Esophagus muscularis mucosa (tissue), 4 donors: ENCODE measurements at regions of chr12 and their contacts with region 1.

Region 1: GRCh38 chr12:48851883-48852733 is at the start of gene DDX23:
- DNase-seq: peak; percentile 99
- H3K4me3 ChIP-seq: peak within 1 kb of the TSS; percentile 74 to 94 (median 90)
- H3K27ac ChIP-seq: peak within 1 kb of the TSS; percentile 80 to 94 (median 84)
- H3K4me1 ChIP-seq: peaks cover 26 to 38% (median 32%) of the 10 kb centered on the region in 4 donors
- H3K27me3 ChIP-seq: no peaks in the 10 kb centered on the region
- CTCF ChIP-seq: no peak
- EP300 ChIP-seq: peak; percentile 94
- POLR2A ChIP-seq: peak; percentile 27
- total RNA-seq, gene DDX23: 51.1 to 88.3 (median 74.1) TPM

Region 2: DNA sequence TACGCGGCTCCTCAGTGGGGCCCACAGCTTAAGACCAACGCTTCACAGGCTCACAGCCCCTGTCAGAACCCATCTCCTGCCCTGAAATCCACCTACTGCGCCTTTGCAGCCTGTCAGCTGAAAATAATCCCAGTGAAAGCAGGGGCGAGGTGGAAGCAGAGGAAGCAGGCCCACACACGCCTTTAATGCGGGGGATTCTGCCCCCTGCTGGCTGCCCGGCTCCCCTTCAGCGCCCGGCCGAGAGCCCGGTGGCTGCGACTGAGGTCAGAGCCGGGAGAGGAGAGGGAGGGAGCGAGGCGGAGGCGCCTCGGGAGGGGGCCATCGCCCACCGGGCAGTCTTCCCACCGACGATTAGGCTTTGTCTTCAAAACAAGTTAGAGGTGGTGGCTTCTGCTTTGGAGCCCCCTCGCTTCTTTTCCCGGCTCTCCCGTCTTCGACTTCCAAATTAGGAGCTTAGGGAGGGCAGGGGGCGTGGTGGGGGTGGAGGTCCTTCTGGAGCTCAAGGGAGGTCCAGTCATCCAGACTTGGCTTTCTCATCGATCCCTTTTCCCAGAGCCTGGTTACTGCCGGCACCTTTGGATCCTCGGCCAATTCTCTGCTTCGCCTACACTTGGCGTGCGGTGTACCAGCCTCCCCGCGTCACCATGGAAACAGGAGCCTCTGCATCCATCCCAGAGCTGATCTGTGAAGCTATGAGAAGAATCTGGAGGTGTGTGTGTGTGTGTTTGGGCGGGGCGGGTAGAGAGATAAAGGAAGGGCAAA is 38.7 kb after region 1 on chr12:
- intact Hi-C with region 1: loop called (anchors 1 kb)
- DNase-seq: no peak
- H3K4me3 ChIP-seq: peak overlapping the region; percentile 31 to 47 (median 41)
- H3K27ac ChIP-seq: no peak overlapping the region
- H3K4me1 ChIP-seq: peaks cover 7 to 13% (median 10%) of the 10 kb centered on the region in 4 donors
- H3K27me3 ChIP-seq: peaks cover 0 to 10% (median 0%) of the 10 kb centered on the region in 4 donors
- CTCF ChIP-seq: peak; percentile 86 to 97 (median 90)
- EP300 ChIP-seq: no peak
- POLR2A ChIP-seq: no peak

Region 3: DNA sequence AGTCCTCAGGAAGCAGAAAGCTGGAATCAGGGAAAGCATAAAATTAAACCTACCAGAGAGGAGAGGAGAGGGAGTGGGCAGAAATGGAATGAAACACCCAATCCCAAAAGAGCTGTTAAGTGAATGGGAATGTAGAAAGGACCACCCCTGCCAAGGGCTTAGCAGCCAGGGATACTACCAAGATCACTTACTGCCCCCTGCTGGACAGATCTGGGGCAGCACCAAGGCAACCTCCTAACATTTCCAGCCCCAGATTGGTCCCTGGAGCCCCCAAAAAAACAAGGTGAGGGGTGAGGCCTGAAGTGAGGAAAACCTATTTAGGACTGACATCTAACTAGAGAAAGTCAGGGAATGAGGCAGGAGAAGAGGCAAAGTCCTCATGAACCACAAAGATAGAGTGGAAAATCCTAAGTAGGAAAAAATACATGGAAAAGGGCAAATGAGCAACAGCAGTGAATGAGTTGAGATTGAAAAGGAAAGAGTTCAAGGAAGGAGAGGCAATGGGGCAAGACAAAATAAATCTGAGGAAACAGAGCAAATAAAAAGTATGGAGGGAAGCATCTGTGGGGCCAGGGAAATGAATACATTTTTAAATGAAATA is 84.4 kb after region 1 on chr12:
- intact Hi-C with region 1: loop called (anchors 5 kb)
- DNase-seq: no peak
- H3K4me3 ChIP-seq: no peak overlapping the region
- H3K27ac ChIP-seq: no peak overlapping the region
- H3K4me1 ChIP-seq: peaks cover 0 to 4% (median 0%) of the 10 kb centered on the region in 4 donors
- H3K27me3 ChIP-seq: no peaks in the 10 kb centered on the region
- CTCF ChIP-seq: peak; percentile 65 to 97 (median 74)
- EP300 ChIP-seq: no peak
- POLR2A ChIP-seq: no peak

Region 4: GRCh38 chr12:48957141-48958048 is 105.3 kb after region 1 on chr12 and contains the start of gene ARF3:
- intact Hi-C with region 1: no loop called
- DNase-seq: peak; percentile 97
- H3K4me3 ChIP-seq: peak within 1 kb of the TSS; percentile 87 to 98 (median 96)
- H3K27ac ChIP-seq: peak within 1 kb of the TSS; percentile 81 to 94 (median 89)
- H3K4me1 ChIP-seq: peaks cover 21 to 34% (median 31%) of the 10 kb centered on the region in 4 donors
- H3K27me3 ChIP-seq: peaks cover 0 to 13% (median 0%) of the 10 kb centered on the region in 4 donors
- CTCF ChIP-seq: no peak
- EP300 ChIP-seq: no peak
- POLR2A ChIP-seq: no peak
- total RNA-seq, gene ARF3: 42.8 to 71.9 (median 65.1) TPM